ENCODE measurements at regions of chr13 and their contacts with region 1.

Region 1: GRCh38 chr13:101144808-101145419 is 271.4 kb downstream of the NALCN start:
- DNase-seq: peak; percentile 46
- H3K4me3 ChIP-seq: no peak overlapping the region; a peak in 1 of 4 replicates
- H3K27ac ChIP-seq: no peak overlapping the region
- H3K4me1 ChIP-seq: no peaks in the 10 kb centered on the region; a peak in 2 of 4 replicates
- H3K27me3 ChIP-seq: no peaks in the 10 kb centered on the region
- CTCF ChIP-seq: peak; percentile 80
- EP300 ChIP-seq: no peak
- RAD21 ChIP-seq: peak; percentile 91

Region 2: GRCh38 chr13:101155920-101156319 is 11.0 kb after region 1 on chr13:
- CTCF ChIA-PET with region 1: interaction called, 36 read pairs
- POLR2A ChIA-PET with region 1: no interaction called
- DNase-seq: no peak
- H3K4me3 ChIP-seq: no peak overlapping the region
- H3K27ac ChIP-seq: no peak overlapping the region
- H3K4me1 ChIP-seq: peaks cover 4 to 11% of the 10 kb centered on the region in 2 experiments; a peak in 2 of 4 replicates
- H3K27me3 ChIP-seq: no peaks in the 10 kb centered on the region
- CTCF ChIP-seq: peak; percentile 62
- EP300 ChIP-seq: no peak
- RAD21 ChIP-seq: peak; percentile 46

Region 3: DNA sequence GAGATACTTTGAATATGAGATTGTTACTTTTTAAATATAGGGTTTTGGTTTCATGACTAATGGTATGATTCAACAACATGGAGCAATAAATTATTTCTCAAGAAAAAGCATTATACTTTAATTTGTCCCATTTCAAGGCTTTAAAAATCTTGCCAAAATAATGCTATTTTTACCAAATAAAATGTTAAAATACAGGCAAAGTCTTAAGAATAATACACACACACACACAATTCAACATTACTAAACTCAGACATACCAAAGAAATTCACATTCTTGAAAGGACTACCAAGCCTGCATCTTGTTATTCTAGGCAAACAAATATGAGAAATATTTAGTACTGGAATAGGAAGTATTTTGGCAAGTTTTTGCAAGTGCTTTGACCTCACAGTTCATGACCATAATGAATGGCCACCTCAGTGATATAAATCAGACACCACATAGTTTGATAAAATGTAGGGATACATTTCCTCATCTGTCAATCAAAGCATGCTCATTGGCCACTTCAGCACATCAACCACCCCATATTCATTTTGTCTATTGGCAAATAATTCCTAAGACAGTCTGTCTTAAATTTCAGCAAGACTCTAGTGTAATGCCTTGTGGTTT is 164.2 kb after region 1 on chr13:
- CTCF ChIA-PET with region 1: interaction called, 10 read pairs
- POLR2A ChIA-PET with region 1: no interaction called
- DNase-seq: no peak
- H3K4me3 ChIP-seq: no peak overlapping the region
- H3K27ac ChIP-seq: peak overlapping the region; percentile 73 to 80; a peak in 3 of 4 replicates
- H3K4me1 ChIP-seq: peaks cover 4 to 15% of the 10 kb centered on the region in 2 experiments
- H3K27me3 ChIP-seq: no peaks in the 10 kb centered on the region
- CTCF ChIP-seq: no peak
- EP300 ChIP-seq: peak; percentile 80 to 97
- RAD21 ChIP-seq: no peak

Region 4: GRCh38 chr13:101474419-101474957 is 329.6 kb after region 1 on chr13:
- CTCF ChIA-PET with region 1: interaction called, 12 read pairs
- POLR2A ChIA-PET with region 1: no interaction called
- DNase-seq: no peak
- H3K4me3 ChIP-seq: no peak overlapping the region
- H3K27ac ChIP-seq: peak overlapping the region in 1 of 2 experiments; percentile 55; a peak in 2 of 4 replicates
- H3K4me1 ChIP-seq: peaks cover 7 to 8% of the 10 kb centered on the region in 2 experiments; a peak in 2 of 4 replicates
- H3K27me3 ChIP-seq: no peaks in the 10 kb centered on the region
- CTCF ChIP-seq: peak; percentile 69
- EP300 ChIP-seq: peak in 1 of 2 experiments; percentile 47; a peak in 1 of 4 replicates
- RAD21 ChIP-seq: peak; percentile 75

Region 5: GRCh38 chr13:101916108-101916757 is 771.3 kb after region 1 on chr13:
- CTCF ChIA-PET with region 1: interaction called, 18 read pairs
- POLR2A ChIA-PET with region 1: no interaction called
- DNase-seq: peak; percentile 87
- H3K4me3 ChIP-seq: peak overlapping the region; percentile 57 to 59; a peak in 3 of 4 replicates
- H3K27ac ChIP-seq: peak overlapping the region in 1 of 2 experiments; percentile 28; a peak in 1 of 4 replicates
- H3K4me1 ChIP-seq: peaks cover 8 to 23% of the 10 kb centered on the region in 2 experiments; a peak in 3 of 4 replicates
- H3K27me3 ChIP-seq: peaks cover 33% of the 10 kb centered on the region
- CTCF ChIP-seq: peak; percentile 46
- EP300 ChIP-seq: no peak
- RAD21 ChIP-seq: peak; percentile 66

Region 6: GRCh38 chr13:102555917-102556553 is 1411.1 kb after region 1 on chr13:
- CTCF ChIA-PET with region 1: interaction called, 22 read pairs
- POLR2A ChIA-PET with region 1: no interaction called
- DNase-seq: peak; percentile 47
- H3K4me3 ChIP-seq: no peak overlapping the region
- H3K27ac ChIP-seq: peak overlapping the region in 1 of 2 experiments; percentile 55; a peak in 2 of 4 replicates
- H3K4me1 ChIP-seq: peaks cover 0 to 2% of the 10 kb centered on the region in 2 experiments; a peak in 2 of 4 replicates
- H3K27me3 ChIP-seq: no peaks in the 10 kb centered on the region
- CTCF ChIP-seq: peak; percentile 64
- EP300 ChIP-seq: no peak
- RAD21 ChIP-seq: peak; percentile 92